Ovary (tissue), 10 donors: ENCODE measurements at regions of chr6 and their contacts with region 1.

Region 1: DNA sequence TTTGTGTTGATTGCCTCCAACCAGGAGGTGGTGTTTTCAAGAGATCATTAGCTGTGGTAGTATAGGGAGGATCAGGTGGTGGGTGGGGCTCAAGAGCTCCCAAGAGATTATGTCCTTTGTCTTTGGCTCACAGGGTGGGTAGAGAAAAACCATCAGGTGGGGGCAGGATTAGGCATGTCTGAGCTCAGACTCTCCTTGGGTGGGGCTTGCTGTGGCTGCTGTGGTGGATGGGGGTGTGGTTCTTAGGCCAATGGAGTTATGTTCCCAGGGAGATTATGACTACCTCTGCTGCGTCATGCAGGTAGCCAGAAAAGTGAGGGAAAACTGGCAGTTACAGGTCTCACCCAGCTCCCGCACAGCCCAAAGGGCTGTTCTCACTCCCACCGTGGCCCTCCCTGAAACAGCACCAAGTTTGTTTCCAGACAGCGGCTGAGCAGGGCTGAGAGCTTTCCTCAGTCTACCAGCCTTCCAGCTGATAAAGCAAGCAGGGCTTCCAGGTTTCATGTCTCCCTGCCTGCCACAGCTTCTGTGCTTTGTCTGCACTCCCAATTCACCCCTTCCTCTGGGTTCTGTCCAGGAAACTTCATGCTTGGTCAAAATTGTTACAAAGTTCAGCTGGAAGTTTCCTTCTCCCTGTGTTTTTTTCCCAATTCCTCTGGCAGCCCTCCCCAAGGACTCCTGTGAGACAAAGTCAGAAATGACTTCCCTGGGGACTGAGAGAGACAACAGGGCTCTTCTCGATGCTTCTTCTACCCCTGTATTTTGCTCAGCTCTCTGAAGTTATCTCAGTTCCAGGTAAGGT is 481.1 kb upstream of the MAN1A1 start:
- DNase-seq: no peak
- H3K4me3 ChIP-seq: no peak overlapping the region
- H3K27ac ChIP-seq: no peak overlapping the region
- H3K4me1 ChIP-seq: no peaks in the 10 kb centered on the region
- H3K27me3 ChIP-seq: no peaks in the 10 kb centered on the region
- CTCF ChIP-seq: no peak
- EP300 ChIP-seq: no peak
- POLR2A ChIP-seq: no peak

Region 2: DNA sequence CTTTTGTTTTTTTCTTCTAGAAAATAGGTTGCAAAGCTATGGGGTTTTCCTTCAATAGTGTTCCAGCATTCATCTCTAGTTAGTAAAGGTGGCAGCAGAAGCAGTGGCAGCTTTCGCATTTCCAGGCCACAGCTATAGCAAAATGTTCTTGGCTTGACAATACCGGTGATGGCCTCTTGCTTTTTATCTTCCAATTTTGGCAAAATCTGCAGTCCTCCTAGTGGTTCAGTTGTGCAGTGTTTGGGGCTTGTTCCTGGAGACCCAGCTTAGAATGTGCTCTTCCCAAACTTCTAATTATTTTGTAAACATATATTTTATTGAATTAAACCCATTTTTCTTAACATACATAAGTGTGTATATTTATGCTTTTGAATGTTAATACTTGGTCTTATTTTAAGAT is 110.5 kb before region 1 on chr6:
- intact Hi-C with region 1: no loop called
- DNase-seq: no peak
- H3K4me3 ChIP-seq: no peak overlapping the region
- H3K27ac ChIP-seq: no peak overlapping the region
- H3K4me1 ChIP-seq: no peaks in the 10 kb centered on the region
- H3K27me3 ChIP-seq: no peaks in the 10 kb centered on the region
- CTCF ChIP-seq: no peak
- EP300 ChIP-seq: no peak
- POLR2A ChIP-seq: no peak

Region 3: GRCh38 chr6:119874381-119874780 is 43.7 kb after region 1 on chr6:
- intact Hi-C with region 1: loop called in 1 of 4 experiments (anchors 1 kb)
- DNase-seq: no peak
- H3K4me3 ChIP-seq: no peak overlapping the region
- H3K27ac ChIP-seq: no peak overlapping the region
- H3K4me1 ChIP-seq: no peaks in the 10 kb centered on the region
- H3K27me3 ChIP-seq: no peaks in the 10 kb centered on the region
- CTCF ChIP-seq: no peak
- EP300 ChIP-seq: no peak
- POLR2A ChIP-seq: no peak